GM12878 (cell line): ENCODE measurements at regions of chr6 and their contacts with region 1.

Region 1: GRCh38 chr6:291697-292505 is at the start of gene DUSP22:
- DNase-seq: peak; percentile 81
- ATAC-seq: peak; percentile 45
- H3K4me3 ChIP-seq: peak within 1 kb of the TSS; percentile 78
- H3K27ac ChIP-seq: peak within 1 kb of the TSS; percentile 100
- H3K4me1 ChIP-seq: peaks cover 64% of the 10 kb centered on the region
- H3K27me3 ChIP-seq: no peaks in the 10 kb centered on the region
- CTCF ChIP-seq: no peak
- EP300 ChIP-seq: peak; percentile 53 to 76; a peak in 2 of 4 replicates
- POLR2A ChIP-seq: no peak
- RAD21 ChIP-seq: peak; percentile 42
- polyA plus RNA-seq, gene DUSP22: 93.4 to 99.7 TPM

Region 2: DNA sequence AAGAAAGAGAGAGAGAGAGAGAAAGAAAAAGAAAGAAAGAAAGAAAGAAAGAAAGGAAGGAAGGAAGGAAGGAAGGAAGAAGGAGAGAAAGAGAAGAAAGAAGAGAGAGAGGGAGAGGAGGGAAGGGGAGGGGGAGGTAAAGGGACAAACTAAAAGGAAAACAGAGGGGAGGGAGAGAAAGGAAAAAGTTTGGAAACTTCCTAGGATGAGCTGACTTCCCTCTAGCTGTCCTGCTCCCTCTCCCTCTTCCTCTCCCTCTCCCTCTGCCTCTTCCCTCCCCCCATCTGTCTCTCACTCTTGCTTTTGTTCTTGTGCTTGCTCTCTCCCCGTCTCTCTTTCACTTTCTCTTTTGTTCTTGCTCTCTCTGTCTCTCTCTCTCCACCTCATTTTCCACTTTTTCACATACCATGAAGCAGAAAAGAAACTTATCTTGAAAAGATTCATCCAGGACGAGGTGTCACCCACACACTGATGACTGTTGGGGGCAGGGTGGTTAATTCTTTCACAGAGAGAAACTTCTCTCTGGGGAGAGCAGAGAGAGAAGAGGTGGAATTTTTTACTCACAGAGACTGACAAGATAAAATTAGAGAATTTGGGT is 56.0 kb before region 1 on chr6:
- CTCF ChIA-PET with region 1: interaction called, 9 read pairs
- POLR2A ChIA-PET with region 1: interaction called, 39 read pairs
- RAD21 ChIA-PET with region 1: interaction called, 60 read pairs
- SMC1A ChIA-PET with region 1: interaction called, 150 read pairs
- in situ Hi-C with region 1: no loop called
- intact Hi-C with region 1: no loop called
- DNase-seq: peak; percentile 85
- ATAC-seq: peak; percentile 78
- H3K4me3 ChIP-seq: peak overlapping the region; percentile 16; the same call in 1 of the 2 replicates
- H3K27ac ChIP-seq: peak overlapping the region; percentile 87
- H3K4me1 ChIP-seq: peaks cover 51% of the 10 kb centered on the region
- H3K27me3 ChIP-seq: no peaks in the 10 kb centered on the region
- CTCF ChIP-seq: no peak
- EP300 ChIP-seq: peak in 1 of 2 experiments; percentile 73; a peak in 2 of 4 replicates
- POLR2A ChIP-seq: no peak
- RAD21 ChIP-seq: peak; percentile 37; the same call in 1 of the 2 replicates

Region 3: GRCh38 chr6:259901-260508 is 31.9 kb before region 1 on chr6:
- CTCF ChIA-PET with region 1: interaction called, 9 read pairs
- POLR2A ChIA-PET with region 1: interaction called, 16 read pairs
- RAD21 ChIA-PET with region 1: interaction called, 73 read pairs
- SMC1A ChIA-PET with region 1: interaction called, 162 read pairs
- in situ Hi-C with region 1: no loop called
- intact Hi-C with region 1: loop called (anchors 2 kb)
- DNase-seq: peak; percentile 77
- ATAC-seq: peak; percentile 91
- H3K4me3 ChIP-seq: peak overlapping the region; percentile 20
- H3K27ac ChIP-seq: peak overlapping the region; percentile 82
- H3K4me1 ChIP-seq: peaks cover 37% of the 10 kb centered on the region
- H3K27me3 ChIP-seq: no peaks in the 10 kb centered on the region
- CTCF ChIP-seq: no peak
- EP300 ChIP-seq: no peak
- POLR2A ChIP-seq: no peak
- RAD21 ChIP-seq: no peak

Region 4: DNA sequence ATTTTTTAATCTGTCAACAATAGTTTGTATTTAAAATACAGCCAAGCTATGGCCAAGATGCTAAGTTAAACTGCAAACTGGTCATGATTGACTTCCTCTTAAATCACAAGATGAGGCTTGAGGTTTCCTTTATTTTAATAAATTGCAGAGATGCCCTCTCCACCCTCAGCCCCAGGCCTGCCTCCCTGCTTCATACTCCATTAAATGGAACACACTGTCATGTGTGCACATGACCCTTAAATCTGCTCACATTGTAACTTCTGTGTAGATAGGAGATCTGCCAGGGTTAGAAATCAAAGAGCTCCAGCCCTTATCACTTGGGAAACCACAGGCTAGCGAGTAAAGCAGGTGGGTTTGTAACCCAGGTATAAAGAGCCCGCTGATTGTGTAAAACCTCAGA is 21.2 kb after region 1 on chr6:
- CTCF ChIA-PET with region 1: interaction called, 56 read pairs
- POLR2A ChIA-PET with region 1: interaction called, 67 read pairs
- RAD21 ChIA-PET with region 1: interaction called, 112 read pairs
- SMC1A ChIA-PET with region 1: interaction called, 221 read pairs
- in situ Hi-C with region 1: no loop called
- intact Hi-C with region 1: loop called (anchors 1 kb)
- DNase-seq: no peak
- ATAC-seq: peak; percentile 1; the same call in 1 of the 3 replicates
- H3K4me3 ChIP-seq: no peak overlapping the region
- H3K27ac ChIP-seq: peak overlapping the region; percentile 65
- H3K4me1 ChIP-seq: peaks cover 93% of the 10 kb centered on the region
- H3K27me3 ChIP-seq: no peaks in the 10 kb centered on the region
- CTCF ChIP-seq: no peak
- EP300 ChIP-seq: no peak
- POLR2A ChIP-seq: no peak
- RAD21 ChIP-seq: no peak

Region 5: GRCh38 chr6:364609-365540 is 73.0 kb after region 1 on chr6:
- CTCF ChIA-PET with region 1: interaction called, 3 read pairs
- POLR2A ChIA-PET with region 1: interaction called, 10 read pairs
- RAD21 ChIA-PET with region 1: interaction called, 4 read pairs
- SMC1A ChIA-PET with region 1: interaction called, 5 read pairs
- in situ Hi-C with region 1: no loop called
- intact Hi-C with region 1: loop called (anchors 2 kb)
- DNase-seq: peak; percentile 78
- ATAC-seq: peak; percentile 94
- H3K4me3 ChIP-seq: no peak overlapping the region
- H3K27ac ChIP-seq: peak overlapping the region; percentile 33
- H3K4me1 ChIP-seq: peaks cover 25% of the 10 kb centered on the region
- H3K27me3 ChIP-seq: no peaks in the 10 kb centered on the region
- CTCF ChIP-seq: no peak
- EP300 ChIP-seq: peak; percentile 37 to 88; a peak in 2 of 4 replicates
- POLR2A ChIP-seq: no peak
- RAD21 ChIP-seq: 0 out of 2 replicates have a peak, but pooled peaks have one; percentile 2

Region 6: DNA sequence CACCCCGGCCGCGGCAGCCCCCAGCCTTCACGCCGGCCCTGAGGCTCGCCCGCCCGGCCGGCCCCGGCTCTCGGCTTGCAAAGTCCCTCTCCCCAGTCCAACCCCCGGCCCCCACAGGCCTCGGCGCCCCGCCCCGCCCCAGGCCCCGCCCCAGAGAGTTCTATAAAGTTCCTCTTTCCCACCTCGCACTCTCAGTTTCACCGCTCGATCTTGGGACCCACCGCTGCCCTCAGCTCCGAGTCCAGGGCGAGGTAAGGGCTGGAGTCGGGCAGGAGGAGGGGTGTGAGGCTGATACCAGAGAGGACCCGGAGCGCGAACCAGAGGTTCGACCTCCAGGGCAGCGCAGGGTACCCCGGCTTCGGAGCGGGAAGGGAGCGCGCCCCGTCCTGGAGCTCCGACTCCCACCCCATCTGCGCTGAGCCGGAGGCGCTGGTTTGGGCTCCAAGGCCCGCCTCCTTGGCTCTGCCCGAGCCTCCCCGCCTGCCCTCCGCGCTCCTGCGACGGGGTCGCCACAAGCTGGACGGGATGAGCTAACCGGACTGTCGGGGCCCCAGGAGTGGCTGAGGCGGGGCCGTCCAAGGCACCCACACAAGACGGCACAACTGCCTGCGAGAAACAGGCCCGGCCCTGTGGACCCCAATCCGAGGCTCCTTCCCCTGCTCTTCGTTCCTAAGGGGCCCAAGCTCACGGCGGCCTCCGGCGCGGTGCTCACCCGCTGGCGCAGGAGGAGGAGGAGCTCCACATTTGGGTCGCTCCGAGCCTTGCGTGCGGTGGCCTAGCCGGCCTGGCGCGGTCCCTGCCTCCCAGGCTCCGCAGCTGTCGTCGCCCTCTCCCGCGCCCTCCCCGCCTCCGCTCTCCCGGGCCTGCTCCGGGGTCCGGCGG is 99.9 kb after region 1 on chr6 and contains the start of gene IRF4:
- CTCF ChIA-PET with region 1: interaction called, 4 read pairs
- POLR2A ChIA-PET with region 1: interaction called, 16 read pairs
- RAD21 ChIA-PET with region 1: interaction called, 13 read pairs
- SMC1A ChIA-PET with region 1: interaction called, 11 read pairs
- in situ Hi-C with region 1: no loop called
- intact Hi-C with region 1: loop called (anchors 2 kb)
- DNase-seq: no peak
- ATAC-seq: peak; percentile 63
- H3K4me3 ChIP-seq: peak within 1 kb of the TSS; percentile 95
- H3K27ac ChIP-seq: peak within 1 kb of the TSS; percentile 97
- H3K4me1 ChIP-seq: peaks cover 33% of the 10 kb centered on the region
- H3K27me3 ChIP-seq: no peaks in the 10 kb centered on the region
- CTCF ChIP-seq: no peak
- EP300 ChIP-seq: no peak
- POLR2A ChIP-seq: peak; percentile 77
- RAD21 ChIP-seq: peak; percentile 25; the same call in 1 of the 2 replicates
- polyA plus RNA-seq, gene IRF4: 50.0 to 98.9 TPM

Region 7: DNA sequence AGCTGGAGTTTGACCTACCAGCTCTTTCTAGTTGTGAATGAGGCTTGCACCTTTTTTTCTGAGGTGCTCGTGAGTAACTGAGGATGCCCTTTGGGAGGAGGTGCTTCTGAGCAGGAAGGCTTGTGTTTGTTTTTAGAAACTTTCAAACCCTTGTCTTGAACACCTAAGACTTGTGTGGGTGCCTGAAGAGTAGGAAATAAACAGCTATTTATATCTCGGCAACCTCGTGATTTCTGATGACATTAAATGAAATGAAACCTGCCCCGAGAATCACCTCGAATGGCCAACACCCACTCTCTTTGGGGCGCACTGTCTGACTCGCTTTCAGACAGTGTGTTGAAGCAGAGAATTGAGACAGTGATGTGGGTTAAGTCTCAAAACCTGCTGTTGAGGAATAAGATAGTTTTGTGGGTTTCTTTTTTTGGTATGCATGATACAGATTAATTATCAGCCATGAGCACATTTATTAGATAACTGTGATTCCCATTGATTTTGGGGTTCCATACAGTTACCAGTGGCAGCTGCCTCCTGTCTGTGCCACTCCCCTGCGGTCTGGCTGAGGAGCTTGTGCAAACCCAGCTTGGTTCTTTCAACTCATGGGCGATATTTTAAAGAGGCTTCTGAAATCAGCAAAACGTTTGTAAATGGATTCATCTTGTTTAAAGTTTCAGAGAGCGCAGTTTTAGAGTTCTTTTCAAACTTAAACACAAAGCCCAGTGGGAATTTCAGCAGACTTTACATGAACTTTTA is 108.1 kb after region 1 on chr6:
- CTCF ChIA-PET with region 1: interaction called, 9 read pairs
- POLR2A ChIA-PET with region 1: interaction called, 7 read pairs
- RAD21 ChIA-PET with region 1: interaction called, 12 read pairs
- SMC1A ChIA-PET with region 1: interaction called, 11 read pairs
- in situ Hi-C with region 1: no loop called
- intact Hi-C with region 1: no loop called
- DNase-seq: no peak
- ATAC-seq: peak; percentile 10
- H3K4me3 ChIP-seq: peak overlapping the region; percentile 61
- H3K27ac ChIP-seq: peak overlapping the region; percentile 39
- H3K4me1 ChIP-seq: peaks cover 35% of the 10 kb centered on the region
- H3K27me3 ChIP-seq: no peaks in the 10 kb centered on the region
- CTCF ChIP-seq: no peak
- EP300 ChIP-seq: peak; percentile 56 to 84; a peak in 2 of 4 replicates
- POLR2A ChIP-seq: peak; percentile 89
- RAD21 ChIP-seq: 0 out of 2 replicates have a peak, but pooled peaks have one; percentile 1

Region 8: GRCh38 chr6:537114-537513 is 245.2 kb after region 1 on chr6:
- CTCF ChIA-PET with region 1: no interaction called
- POLR2A ChIA-PET with region 1: no interaction called
- RAD21 ChIA-PET with region 1: no interaction called
- SMC1A ChIA-PET with region 1: no interaction called
- in situ Hi-C with region 1: no loop called
- intact Hi-C with region 1: no loop called
- DNase-seq: no peak
- ATAC-seq: no peak
- H3K4me3 ChIP-seq: no peak overlapping the region
- H3K27ac ChIP-seq: no peak overlapping the region
- H3K4me1 ChIP-seq: no peaks in the 10 kb centered on the region
- H3K27me3 ChIP-seq: no peaks in the 10 kb centered on the region
- CTCF ChIP-seq: no peak
- EP300 ChIP-seq: no peak
- POLR2A ChIP-seq: no peak
- RAD21 ChIP-seq: no peak